Caco-2 (cell line): ENCODE measurements at regions of chr4 and their contacts with region 1.

Region 1: GRCh38 chr4:119659616-119660015 is 31.0 kb upstream of the PDE5A start:
- DNase-seq: peak; percentile 43 to 56
- H3K4me3 ChIP-seq: no peak overlapping the region
- H3K4me3 Mint-ChIP-seq: no peak overlapping the region
- H3K27ac Mint-ChIP-seq: peak overlapping the region; percentile 34
- H3K4me1 ChIP-seq: peaks cover 44% of the 10 kb centered on the region
- H3K4me1 Mint-ChIP-seq: peaks cover 8% of the 10 kb centered on the region
- H3K27me3 ChIP-seq: no peaks in the 10 kb centered on the region
- H3K27me3 Mint-ChIP-seq: no peaks in the 10 kb centered on the region
- CTCF ChIP-seq: no peak

Region 2: GRCh38 chr4:119597377-119597776 is 62.2 kb before region 1 on chr4:
- CTCF ChIA-PET with region 1: no interaction called
- POLR2A ChIA-PET with region 1: no interaction called
- intact Hi-C with region 1: no loop called
- DNase-seq: no peak
- H3K4me3 ChIP-seq: no peak overlapping the region
- H3K4me3 Mint-ChIP-seq: no peak overlapping the region
- H3K27ac Mint-ChIP-seq: no peak overlapping the region
- H3K4me1 ChIP-seq: no peaks in the 10 kb centered on the region
- H3K4me1 Mint-ChIP-seq: no peaks in the 10 kb centered on the region
- H3K27me3 ChIP-seq: no peaks in the 10 kb centered on the region
- H3K27me3 Mint-ChIP-seq: no peaks in the 10 kb centered on the region
- CTCF ChIP-seq: no peak

Region 3: GRCh38 chr4:119648398-119648797 is 11.2 kb before region 1 on chr4:
- CTCF ChIA-PET with region 1: no interaction called
- POLR2A ChIA-PET with region 1: no interaction called
- intact Hi-C with region 1: loop called (anchors 1 kb)
- DNase-seq: peak; percentile 42 to 64
- H3K4me3 ChIP-seq: no peak overlapping the region
- H3K4me3 Mint-ChIP-seq: no peak overlapping the region
- H3K27ac Mint-ChIP-seq: no peak overlapping the region
- H3K4me1 ChIP-seq: peaks cover 34% of the 10 kb centered on the region
- H3K4me1 Mint-ChIP-seq: peaks cover 20% of the 10 kb centered on the region
- H3K27me3 ChIP-seq: no peaks in the 10 kb centered on the region
- H3K27me3 Mint-ChIP-seq: no peaks in the 10 kb centered on the region
- CTCF ChIP-seq: no peak